ENCODE measurements at regions of chr1 and their contacts with region 1.

Region 1: DNA sequence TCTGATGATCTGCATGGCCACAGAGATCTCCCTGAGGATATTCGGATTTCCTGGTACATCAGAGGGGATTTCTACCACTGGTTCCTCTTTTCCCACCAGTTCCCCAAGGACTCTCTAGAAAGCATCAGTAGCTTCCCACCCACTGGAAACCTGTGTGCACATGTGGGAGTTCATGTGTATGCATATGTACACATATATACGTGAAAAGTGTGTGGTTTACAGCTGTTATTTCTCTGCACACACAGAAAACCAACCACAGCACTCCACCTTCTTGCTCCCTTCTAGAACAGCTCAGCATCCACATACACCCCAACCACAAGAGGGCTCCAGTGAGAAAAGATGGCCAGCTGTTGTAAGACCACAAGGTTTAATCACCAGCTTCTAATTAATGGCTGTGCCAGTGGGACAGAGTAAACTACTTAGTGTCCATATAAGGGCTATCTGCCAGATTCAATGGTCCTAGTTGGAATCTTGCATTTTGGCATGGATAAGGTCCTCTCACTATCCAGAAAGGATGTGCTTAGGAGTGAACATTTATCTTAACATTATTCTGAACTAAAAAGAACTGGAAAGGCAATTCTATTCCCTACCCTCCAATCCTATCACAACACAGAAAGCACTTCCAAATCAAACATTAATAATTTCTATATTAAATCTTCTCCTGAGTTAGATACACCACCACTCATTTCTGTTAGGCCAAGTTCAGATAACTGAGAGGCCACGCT is 24.1 kb downstream of the GPR3 start:
- ATAC-seq: peak in 4 of 8 experiments; percentile 25 to 73 (median 46)
- H3K4me3 ChIP-seq: no peak overlapping the region
- H3K27ac ChIP-seq: no peak overlapping the region
- H3K4me1 ChIP-seq: peaks cover 16 to 20% of the 10 kb centered on the region in 2 donors

Region 2: GRCh38 chr1:27525296-27526272 is 109.0 kb after region 1 on chr1:
- in situ Hi-C with region 1: no loop called
- ATAC-seq: peak; percentile 4 to 63 (median 44)
- H3K4me3 ChIP-seq: no peak overlapping the region
- H3K27ac ChIP-seq: peak overlapping the region; percentile 56 to 85
- H3K4me1 ChIP-seq: peaks cover 88% of the 10 kb centered on the region in 2 donors

Region 3: GRCh38 chr1:27643701-27644625 is 227.4 kb after region 1 on chr1:
- in situ Hi-C with region 1: loop called in 1 of 9 experiments (anchors 25 kb)
- ATAC-seq: peak in 7 of 8 experiments; percentile 35 to 97 (median 48)
- H3K4me3 ChIP-seq: no peak overlapping the region
- H3K27ac ChIP-seq: no peak overlapping the region
- H3K4me1 ChIP-seq: no peaks in the 10 kb centered on the region